ENCODE measurements at regions of chr5 and their contacts with region 1.

Region 1: DNA sequence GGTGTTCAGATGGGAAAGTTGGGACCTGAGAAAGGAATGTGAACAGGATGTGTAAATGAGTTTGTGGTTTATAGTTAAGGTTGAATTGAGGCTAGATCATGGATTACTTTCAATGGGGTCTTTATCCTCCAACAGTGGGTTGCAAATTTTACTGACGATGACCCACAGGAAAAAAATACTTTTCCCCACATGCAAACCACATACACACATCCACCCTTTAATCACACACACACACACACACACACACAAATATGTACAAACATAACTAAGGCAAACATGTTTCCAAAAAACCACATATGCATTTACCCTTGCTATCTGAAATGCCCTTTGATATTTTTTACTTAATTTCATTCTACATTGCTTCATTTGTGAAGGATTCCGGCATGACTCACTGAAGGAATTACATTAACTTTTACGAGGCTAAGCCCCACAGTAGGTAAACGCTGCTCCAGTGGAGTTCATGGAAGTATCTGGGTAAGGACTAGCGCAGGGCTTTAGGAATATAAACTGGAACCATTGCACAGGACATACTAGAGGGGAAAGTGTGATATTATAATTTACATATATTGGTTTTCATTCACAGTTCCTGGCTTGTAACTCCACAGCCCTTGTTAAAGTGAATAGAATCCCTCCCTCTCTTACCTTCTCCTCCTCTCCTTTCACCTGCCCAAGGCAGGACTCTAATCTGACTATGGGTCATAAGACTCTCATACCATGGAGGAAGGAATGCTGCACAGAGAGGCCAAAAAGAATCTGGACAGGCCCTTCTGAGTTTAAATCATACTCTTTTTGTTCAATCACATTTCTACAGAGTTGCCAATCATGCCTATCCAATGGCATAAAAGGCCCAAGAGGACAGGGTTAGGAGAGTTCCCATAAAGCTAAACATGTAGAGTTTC is 8.5 kb upstream of the SPEF2 start:
- DNase-seq: peak in 1 of 2 donors; percentile 20
- H3K4me3 ChIP-seq: no peak overlapping the region
- H3K27ac ChIP-seq: no peak overlapping the region
- H3K4me1 ChIP-seq: no peaks in the 10 kb centered on the region
- H3K27me3 ChIP-seq: no peaks in the 10 kb centered on the region
- CTCF ChIP-seq: no peak
- EP300 ChIP-seq: no peak
- POLR2A ChIP-seq: no peak

Region 2: DNA sequence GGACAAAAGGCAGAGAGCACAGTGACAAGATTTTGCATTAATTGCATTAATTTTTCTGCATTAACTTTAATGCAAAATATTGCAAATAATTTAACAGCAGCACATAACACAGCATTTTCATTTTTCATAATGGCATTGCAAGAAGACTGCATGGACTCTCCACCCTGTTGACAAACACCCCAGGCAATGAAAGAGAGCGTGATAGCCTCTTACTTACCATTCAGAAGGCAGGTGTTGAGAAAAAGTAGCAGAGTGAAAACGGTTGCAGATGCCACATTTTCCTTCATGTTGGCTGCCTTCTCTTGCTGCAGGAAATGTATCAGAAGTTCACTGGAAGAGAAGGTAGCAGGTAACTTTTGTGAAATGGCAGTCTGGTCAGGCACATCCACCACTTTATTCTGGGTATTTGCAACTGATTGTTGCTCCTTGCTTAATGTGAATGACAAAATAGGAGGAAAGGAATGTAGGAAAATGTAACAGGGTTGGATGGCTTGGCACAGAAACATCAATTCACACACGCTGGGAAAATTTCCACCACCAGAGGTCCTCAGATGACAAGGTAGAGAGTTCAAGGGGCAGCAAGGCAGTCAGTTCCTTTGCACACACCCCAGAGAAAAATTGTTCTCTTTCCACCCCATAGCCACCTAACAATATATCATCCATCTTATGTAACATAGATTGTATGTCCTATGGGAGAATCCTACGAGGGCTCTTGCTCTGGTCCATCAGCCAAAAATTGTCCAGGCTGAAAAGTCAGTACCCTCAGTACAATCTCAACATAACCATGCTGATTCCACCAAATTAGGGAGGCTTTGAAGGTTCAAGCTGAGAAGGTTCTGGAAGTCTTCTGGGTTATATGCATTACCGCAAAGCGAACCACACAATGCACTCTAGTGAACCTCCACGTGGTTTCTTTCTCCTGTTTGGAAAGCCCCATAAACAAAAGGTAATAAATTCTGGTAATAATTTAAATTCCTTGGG is 519.5 kb before region 1 on chr5:
- intact Hi-C with region 1: loop called (anchors 10 kb)
- DNase-seq: peak; percentile 66 to 82
- H3K4me3 ChIP-seq: no peak overlapping the region
- H3K27ac ChIP-seq: no peak overlapping the region
- H3K4me1 ChIP-seq: no peaks in the 10 kb centered on the region
- H3K27me3 ChIP-seq: no peaks in the 10 kb centered on the region
- CTCF ChIP-seq: peak in 5 of 7 experiments; percentile 24 to 77 (median 61)
- EP300 ChIP-seq: no peak
- POLR2A ChIP-seq: no peak

Region 3: DNA sequence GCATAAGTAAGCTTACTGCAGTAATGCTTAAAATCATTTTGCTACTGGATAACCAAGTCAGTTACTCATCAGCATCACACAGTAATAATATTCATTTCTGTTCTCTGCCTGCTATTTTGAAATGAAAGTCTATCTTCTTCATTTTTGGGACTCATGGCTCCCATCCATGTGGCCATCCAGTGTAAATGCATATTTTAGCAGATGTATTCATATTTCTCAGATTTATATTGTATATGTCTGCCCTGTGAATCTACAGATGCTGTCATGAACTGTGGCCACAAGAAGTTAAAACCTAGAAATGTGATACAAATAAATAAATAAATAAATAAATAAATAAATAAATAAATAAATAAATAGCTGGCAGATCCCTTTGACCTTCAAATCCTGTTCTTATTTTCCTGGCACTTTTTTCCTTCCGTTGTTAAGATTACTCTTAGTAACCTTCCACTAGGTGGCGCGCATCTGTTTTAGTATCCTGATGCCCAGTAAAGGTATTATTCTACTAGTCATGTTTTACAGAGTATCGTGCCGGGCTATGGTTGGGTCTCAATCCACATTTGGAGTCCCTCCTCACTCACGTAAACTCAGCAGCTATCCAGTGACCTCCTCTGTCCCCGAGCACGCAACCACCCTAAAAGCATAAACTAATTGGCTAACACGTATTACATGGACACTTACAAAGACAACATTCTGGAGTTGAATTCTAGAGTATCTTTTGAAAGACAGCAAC is 168.4 kb after region 1 on chr5:
- intact Hi-C with region 1: no loop called
- DNase-seq: peak; percentile 74 to 88
- H3K4me3 ChIP-seq: no peak overlapping the region
- H3K27ac ChIP-seq: no peak overlapping the region
- H3K4me1 ChIP-seq: peaks cover 0 to 10% (median 4%) of the 10 kb centered on the region in 4 donors
- H3K27me3 ChIP-seq: no peaks in the 10 kb centered on the region
- CTCF ChIP-seq: peak in 5 of 7 experiments; percentile 6 to 56 (median 36)
- EP300 ChIP-seq: no peak
- POLR2A ChIP-seq: no peak